Activated naive CD4-positive, alpha-beta T cell treated with anti-CD3 and anti-CD28 coated beads for 36 hours (primary cell): ENCODE measurements at regions of chr17 and their contacts with region 1.

Region 1: DNA sequence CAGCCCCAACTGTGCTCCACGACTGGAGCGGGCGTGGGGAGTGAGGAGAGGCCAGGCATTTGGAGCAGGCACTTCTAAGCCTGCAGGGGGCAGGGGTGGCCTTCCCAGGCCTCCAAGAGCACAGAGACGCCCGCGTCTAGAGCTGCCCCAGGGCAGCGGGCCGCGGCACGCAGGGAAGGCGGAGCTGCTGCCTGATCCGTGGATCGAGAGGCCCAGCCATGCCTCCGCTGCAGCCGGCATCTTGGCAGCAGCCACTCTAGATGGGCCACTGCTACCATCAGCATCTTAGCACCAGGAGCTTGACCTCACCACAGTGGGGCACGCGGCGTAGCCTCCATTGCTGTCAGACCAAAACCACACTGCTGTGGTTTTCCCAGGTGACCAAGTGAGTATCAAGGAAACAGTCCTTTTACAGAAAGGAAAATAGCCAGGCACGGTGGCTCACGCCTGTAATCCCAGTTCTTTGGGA is 20.4 kb upstream of the WDR45B start:
- DNase-seq: peak; percentile 65
- H3K4me3 Mint-ChIP-seq: peak overlapping the region; percentile 47
- H3K27ac Mint-ChIP-seq: no peak overlapping the region
- H3K4me1 Mint-ChIP-seq: peaks cover 5% of the 10 kb centered on the region
- H3K27me3 Mint-ChIP-seq: no peaks in the 10 kb centered on the region

Region 2: DNA sequence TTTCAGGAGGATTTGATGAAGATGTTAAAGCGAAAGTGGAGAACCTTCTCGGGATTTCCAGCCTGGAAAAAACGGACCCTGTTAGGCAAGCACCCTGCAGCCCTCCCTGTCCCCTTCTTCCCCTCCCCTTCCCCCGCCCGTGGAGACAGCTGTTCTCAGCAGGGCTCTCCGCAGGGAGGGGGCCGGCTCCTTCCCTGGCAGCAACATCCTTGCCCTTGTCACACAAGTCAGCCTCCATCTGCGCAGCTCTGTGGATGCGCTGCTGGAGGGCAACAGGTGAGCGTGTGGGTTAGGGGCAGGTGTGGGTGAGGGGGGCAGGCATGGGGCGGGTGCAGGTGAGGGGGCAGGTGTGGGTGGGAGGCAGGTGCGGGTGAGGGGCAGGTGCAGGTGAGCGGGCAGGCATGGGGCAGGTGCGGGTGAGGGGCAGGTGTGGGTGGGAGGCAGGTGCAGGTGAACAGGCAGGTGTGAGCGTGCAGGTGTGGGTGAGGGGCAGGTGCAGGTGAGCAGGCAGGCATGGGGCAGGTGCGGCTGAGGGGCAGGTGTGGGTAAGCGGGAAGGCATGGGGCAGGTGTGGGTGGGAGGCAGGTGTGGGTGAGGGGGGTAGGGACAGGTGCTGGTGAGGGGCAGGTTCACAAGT is 227.6 kb before region 1 on chr17:
- CTCF ChIA-PET with region 1: no interaction called
- intact Hi-C with region 1: no loop called
- DNase-seq: no peak
- H3K4me3 Mint-ChIP-seq: no peak overlapping the region
- H3K27ac Mint-ChIP-seq: peak overlapping the region; percentile 41
- H3K4me1 Mint-ChIP-seq: peaks cover 10% of the 10 kb centered on the region
- H3K27me3 Mint-ChIP-seq: no peaks in the 10 kb centered on the region

Region 3: DNA sequence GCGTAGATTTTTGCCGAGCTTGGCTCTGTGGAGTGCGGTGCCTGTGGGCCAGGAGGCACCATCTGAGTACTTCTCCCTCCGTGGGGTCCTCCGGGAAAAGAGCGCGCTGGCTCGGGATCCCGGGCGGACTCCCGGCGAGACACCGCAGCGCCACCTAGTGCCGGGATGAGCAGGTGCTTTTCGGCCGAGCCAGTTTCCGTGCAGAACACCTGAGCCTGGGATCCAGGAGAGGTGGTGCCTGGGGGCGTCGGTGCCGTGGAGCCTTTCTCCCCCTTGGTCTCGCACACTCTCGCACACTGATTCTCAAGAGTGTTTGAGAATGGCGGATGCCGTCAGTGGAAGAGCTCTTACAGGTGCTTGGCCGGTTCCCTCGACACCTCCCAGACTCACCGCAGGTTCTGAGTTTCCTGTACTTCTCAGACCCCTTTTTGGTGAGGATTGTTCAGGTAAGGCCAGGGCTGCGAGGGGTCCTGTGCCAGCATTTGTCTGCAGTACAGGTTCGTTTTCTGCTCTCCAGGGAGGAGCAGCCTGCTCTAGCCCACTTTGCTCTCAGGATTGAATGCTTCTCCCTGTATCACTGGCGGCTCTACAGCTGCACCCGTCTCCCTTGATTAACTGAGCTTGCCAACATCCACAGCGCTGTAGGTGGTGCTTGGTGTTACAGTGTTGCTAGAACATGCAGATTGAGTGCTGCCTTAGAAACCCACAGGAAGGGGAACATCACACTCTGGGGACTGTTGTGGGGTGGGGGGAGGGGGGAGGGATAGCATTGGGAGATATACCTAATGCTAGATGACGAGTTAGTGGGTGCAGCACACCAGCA is 106.5 kb after region 1 on chr17:
- CTCF ChIA-PET with region 1: interaction called, 6 read pairs
- intact Hi-C with region 1: loop called (anchors 2 kb)
- DNase-seq: peak; percentile 60
- H3K4me3 Mint-ChIP-seq: no peak overlapping the region
- H3K27ac Mint-ChIP-seq: no peak overlapping the region
- H3K4me1 Mint-ChIP-seq: peaks cover 2% of the 10 kb centered on the region
- H3K27me3 Mint-ChIP-seq: no peaks in the 10 kb centered on the region